B cell (primary cell): ENCODE measurements at regions of chr11 and their contacts with region 1.

Region 1: DNA sequence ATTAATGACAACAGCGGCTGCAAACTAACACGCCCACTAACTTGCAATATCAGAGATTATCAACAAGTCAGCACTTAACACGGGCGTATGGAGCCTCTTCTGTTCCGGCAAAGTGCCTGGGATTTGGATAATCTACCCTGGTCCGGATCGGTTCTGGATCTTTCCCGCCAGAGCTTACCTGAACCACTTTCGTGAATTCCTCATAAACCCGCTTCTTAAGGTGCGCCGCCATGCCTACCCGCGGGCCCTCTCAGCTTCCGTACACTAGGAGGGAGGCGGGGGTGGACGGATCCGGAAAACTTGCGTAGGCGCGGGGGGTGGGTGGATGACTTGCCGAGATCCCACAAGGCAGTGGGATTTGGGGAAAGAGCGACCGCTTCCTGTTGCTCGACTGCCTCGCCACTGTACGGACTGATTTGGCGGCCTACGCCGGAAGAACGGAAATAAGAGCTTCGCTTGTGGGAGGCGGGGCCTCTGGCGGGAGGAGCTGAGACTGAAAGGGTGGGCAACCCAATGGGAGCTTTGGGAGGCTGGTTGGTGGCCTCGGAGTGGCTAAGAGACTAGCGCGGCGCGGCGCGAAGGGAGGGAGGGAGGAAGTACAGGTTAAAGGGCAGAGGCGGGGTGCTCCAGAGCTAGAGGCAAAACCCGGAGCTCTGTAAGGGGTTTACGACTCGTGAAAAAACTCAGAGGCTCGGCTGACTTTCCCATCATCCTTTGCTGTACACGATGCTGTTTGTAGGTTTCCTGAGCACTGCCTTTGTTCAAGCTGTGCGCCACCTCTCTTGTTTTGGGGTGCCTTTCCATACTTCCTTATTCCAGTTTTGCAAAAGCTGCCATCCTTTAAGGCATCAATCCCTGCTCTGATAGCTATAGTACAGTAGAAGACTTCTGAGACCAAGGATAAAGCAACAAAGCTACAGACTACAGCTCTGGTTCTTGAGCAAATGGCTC is at the start of gene INTS4:
- DNase-seq: peak; percentile 98
- ATAC-seq: peak; percentile 95
- H3K4me3 ChIP-seq: peak within 1 kb of the TSS; percentile 61 to 85 (median 74)
- H3K4me3 Mint-ChIP-seq: peak within 1 kb of the TSS; percentile 97
- H3K27ac ChIP-seq: peak within 1 kb of the TSS; percentile 78 to 94
- H3K27ac Mint-ChIP-seq: peak within 1 kb of the TSS; percentile 90
- H3K4me1 ChIP-seq: peaks cover 29 to 34% of the 10 kb centered on the region in 2 donors
- H3K4me1 Mint-ChIP-seq: peaks cover 35% of the 10 kb centered on the region
- H3K27me3 ChIP-seq: no peaks in the 10 kb centered on the region
- H3K27me3 Mint-ChIP-seq: no peaks in the 10 kb centered on the region
- CTCF ChIP-seq: no peak
- total RNA-seq, gene INTS4: 78.9 and 92.9 TPM in 2 replicates

Region 2: GRCh38 chr11:77066229-77067042 is 928.3 kb before region 1 on chr11 and contains the start of gene CAPN5:
- CTCF ChIA-PET with region 1: no interaction called
- POLR2A ChIA-PET with region 1: no interaction called
- intact Hi-C with region 1: loop called (anchors 5 kb)
- DNase-seq: peak; percentile 92
- ATAC-seq: peak; percentile 96
- H3K4me3 ChIP-seq: peak within 1 kb of the TSS; percentile 48 to 83 (median 69)
- H3K4me3 Mint-ChIP-seq: peak within 1 kb of the TSS; percentile 95
- H3K27ac ChIP-seq: peak within 1 kb of the TSS in 1 of 2 donors; percentile 28
- H3K27ac Mint-ChIP-seq: peak within 1 kb of the TSS; percentile 89
- H3K4me1 ChIP-seq: peaks cover 11 to 16% of the 10 kb centered on the region in 2 donors
- H3K4me1 Mint-ChIP-seq: peaks cover 12% of the 10 kb centered on the region
- H3K27me3 ChIP-seq: peaks cover 0 to 3% (median 0%) of the 10 kb centered on the region in 4 experiments
- H3K27me3 Mint-ChIP-seq: peaks cover 9% of the 10 kb centered on the region
- CTCF ChIP-seq: peak; percentile 52
- total RNA-seq, gene CAPN5: 0.74 and 2.3 TPM in 2 replicates

Region 3: DNA sequence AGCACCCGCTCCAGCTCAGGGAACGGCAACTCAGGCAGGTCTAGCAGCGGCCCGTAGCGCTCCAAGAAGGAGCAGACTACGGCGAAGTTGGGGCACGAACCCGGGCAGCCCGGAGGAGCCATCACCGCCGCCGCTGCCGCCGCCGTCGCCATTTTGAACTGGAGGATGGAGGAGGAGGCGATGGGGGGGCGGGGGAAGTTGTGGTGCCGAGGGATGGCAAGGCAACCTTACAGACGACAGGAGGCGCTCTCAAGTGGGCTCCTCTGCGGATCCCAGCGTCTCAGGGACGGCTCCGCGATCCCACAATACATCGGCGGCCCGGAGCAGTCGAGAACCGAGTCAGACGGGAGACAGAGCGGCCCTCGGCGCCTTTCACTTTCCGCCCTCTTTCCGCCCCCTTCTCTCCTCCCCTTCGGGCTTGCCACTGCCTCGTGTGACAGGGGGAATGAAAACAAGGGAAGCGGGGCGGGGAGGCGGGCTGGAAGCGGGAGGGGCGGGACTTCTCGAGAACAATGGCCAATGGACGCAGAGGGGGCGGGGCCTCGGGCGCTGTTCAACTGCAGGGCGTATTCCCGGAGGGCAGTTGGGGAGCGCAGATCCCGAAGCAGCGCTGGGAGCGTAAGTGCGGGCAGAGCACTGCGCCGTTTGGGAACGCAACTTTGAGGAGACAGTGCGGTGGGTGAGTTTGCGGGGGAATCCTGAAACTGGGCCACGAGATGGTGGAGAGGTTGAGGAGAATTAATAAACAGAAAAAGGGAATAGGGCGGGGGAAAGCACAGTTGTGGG is 173.9 kb before region 1 on chr11 and contains the starts of genes AAMDC and RSF1:
- CTCF ChIA-PET with region 1: interaction called, 5 read pairs
- POLR2A ChIA-PET with region 1: interaction called, 11 read pairs
- intact Hi-C with region 1: loop called (anchors 1 kb)
- DNase-seq: peak; percentile 98
- ATAC-seq: peak; percentile 83
- H3K4me3 ChIP-seq: peak within 1 kb of the TSS; percentile 77 to 98 (median 94)
- H3K4me3 Mint-ChIP-seq: peak within 1 kb of the TSS; percentile 100
- H3K27ac ChIP-seq: peak within 1 kb of the TSS; percentile 81 to 83
- H3K27ac Mint-ChIP-seq: peak within 1 kb of the TSS; percentile 95
- H3K4me1 ChIP-seq: peaks cover 14 to 26% of the 10 kb centered on the region in 2 donors
- H3K4me1 Mint-ChIP-seq: peaks cover 36% of the 10 kb centered on the region
- H3K27me3 ChIP-seq: no peaks in the 10 kb centered on the region
- H3K27me3 Mint-ChIP-seq: no peaks in the 10 kb centered on the region
- CTCF ChIP-seq: peak; percentile 73
- total RNA-seq, gene AAMDC: 4.6 and 7.5 TPM in 2 replicates
- total RNA-seq, gene RSF1: 100 and 104 TPM in 2 replicates

Region 4: DNA sequence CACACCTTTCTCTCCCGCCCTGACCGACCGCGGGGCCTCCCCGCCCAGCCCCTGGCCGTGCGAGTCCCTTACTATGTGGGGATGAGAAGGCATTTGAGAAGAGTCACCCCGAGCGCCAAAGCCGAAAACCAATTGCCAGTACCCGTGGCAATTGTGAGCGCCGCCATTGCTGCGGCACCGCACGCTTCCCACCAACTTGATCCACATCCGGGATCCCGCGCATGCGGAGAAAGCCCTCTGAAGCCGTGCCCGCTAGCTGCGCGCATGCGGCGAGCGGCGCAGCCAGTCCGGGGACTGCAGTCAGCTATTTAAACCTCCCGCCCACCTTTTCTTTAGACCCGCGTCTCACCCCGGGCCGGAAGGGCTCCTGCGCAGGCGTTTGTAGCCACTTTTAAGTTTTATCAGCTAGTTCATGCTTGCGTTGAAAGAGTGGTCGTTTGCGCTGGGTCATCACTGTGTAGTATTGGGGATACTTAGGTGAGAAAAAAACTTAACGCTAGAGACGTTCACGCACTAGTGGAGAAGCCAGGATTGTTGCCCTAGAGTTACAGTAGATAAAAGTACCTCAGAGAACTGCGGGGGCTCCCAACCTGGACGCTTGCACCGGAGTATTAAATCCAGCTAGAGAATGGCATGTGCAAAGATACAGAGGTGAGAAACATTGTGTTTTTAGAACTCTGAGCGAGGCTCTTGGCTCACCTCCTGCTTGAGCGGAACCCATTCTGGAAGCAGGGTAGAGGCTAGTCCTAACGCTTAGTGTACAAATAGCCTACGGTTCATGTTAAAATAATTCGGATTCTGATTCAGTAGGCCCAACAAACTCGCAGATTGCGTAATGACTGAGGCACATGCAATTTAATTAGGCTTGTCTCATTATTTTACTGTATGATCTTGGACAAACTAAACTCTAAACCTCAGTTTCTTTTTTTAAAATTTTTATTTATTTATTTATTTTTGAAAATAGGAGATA is 145.0 kb after region 1 on chr11 and contains the start of gene ALG8:
- CTCF ChIA-PET with region 1: interaction called, 8 read pairs
- POLR2A ChIA-PET with region 1: interaction called, 4 read pairs
- intact Hi-C with region 1: loop called (anchors 2 kb)
- DNase-seq: peak; percentile 96
- ATAC-seq: peak; percentile 95
- H3K4me3 ChIP-seq: peak within 1 kb of the TSS; percentile 77 to 97 (median 85)
- H3K4me3 Mint-ChIP-seq: peak within 1 kb of the TSS; percentile 99
- H3K27ac ChIP-seq: peak within 1 kb of the TSS; percentile 63 to 86
- H3K27ac Mint-ChIP-seq: peak within 1 kb of the TSS; percentile 97
- H3K4me1 ChIP-seq: peaks cover 25 to 36% of the 10 kb centered on the region in 2 donors
- H3K4me1 Mint-ChIP-seq: peaks cover 44% of the 10 kb centered on the region
- H3K27me3 ChIP-seq: no peaks in the 10 kb centered on the region
- H3K27me3 Mint-ChIP-seq: no peaks in the 10 kb centered on the region
- CTCF ChIP-seq: no peak
- total RNA-seq, gene ALG8: 28.5 and 35.3 TPM in 2 replicates

Region 5: GRCh38 chr11:78416305-78417178 is 421.9 kb after region 1 on chr11:
- CTCF ChIA-PET with region 1: no interaction called
- POLR2A ChIA-PET with region 1: no interaction called
- intact Hi-C with region 1: loop called (anchors 5 kb)
- DNase-seq: peak; percentile 87
- ATAC-seq: peak; percentile 48
- H3K4me3 ChIP-seq: peak overlapping the region; percentile 35 to 84 (median 75)
- H3K4me3 Mint-ChIP-seq: peak overlapping the region; percentile 97
- H3K27ac ChIP-seq: peak overlapping the region; percentile 48 to 62
- H3K27ac Mint-ChIP-seq: peak overlapping the region; percentile 98
- H3K4me1 ChIP-seq: peaks cover 42 to 58% of the 10 kb centered on the region in 2 donors
- H3K4me1 Mint-ChIP-seq: peaks cover 74% of the 10 kb centered on the region
- H3K27me3 ChIP-seq: no peaks in the 10 kb centered on the region
- H3K27me3 Mint-ChIP-seq: no peaks in the 10 kb centered on the region
- CTCF ChIP-seq: peak; percentile 63

Region 6: GRCh38 chr11:78533399-78533798 is 538.7 kb after region 1 on chr11:
- CTCF ChIA-PET with region 1: no interaction called
- POLR2A ChIA-PET with region 1: no interaction called
- intact Hi-C with region 1: loop called (anchors 1 kb)
- DNase-seq: peak; percentile 68
- ATAC-seq: peak; percentile 69
- H3K4me3 ChIP-seq: peak overlapping the region in 1 of 5 experiments; percentile 55
- H3K4me3 Mint-ChIP-seq: peak overlapping the region; percentile 29
- H3K27ac ChIP-seq: peak overlapping the region; percentile 69 to 90
- H3K27ac Mint-ChIP-seq: peak overlapping the region; percentile 87
- H3K4me1 ChIP-seq: peaks cover 20 to 28% of the 10 kb centered on the region in 2 donors
- H3K4me1 Mint-ChIP-seq: peaks cover 34% of the 10 kb centered on the region
- H3K27me3 ChIP-seq: no peaks in the 10 kb centered on the region
- H3K27me3 Mint-ChIP-seq: no peaks in the 10 kb centered on the region
- CTCF ChIP-seq: no peak